PC-9 (cell line): ENCODE measurements at regions of chr16 and their contacts with region 1.

Region 1: DNA sequence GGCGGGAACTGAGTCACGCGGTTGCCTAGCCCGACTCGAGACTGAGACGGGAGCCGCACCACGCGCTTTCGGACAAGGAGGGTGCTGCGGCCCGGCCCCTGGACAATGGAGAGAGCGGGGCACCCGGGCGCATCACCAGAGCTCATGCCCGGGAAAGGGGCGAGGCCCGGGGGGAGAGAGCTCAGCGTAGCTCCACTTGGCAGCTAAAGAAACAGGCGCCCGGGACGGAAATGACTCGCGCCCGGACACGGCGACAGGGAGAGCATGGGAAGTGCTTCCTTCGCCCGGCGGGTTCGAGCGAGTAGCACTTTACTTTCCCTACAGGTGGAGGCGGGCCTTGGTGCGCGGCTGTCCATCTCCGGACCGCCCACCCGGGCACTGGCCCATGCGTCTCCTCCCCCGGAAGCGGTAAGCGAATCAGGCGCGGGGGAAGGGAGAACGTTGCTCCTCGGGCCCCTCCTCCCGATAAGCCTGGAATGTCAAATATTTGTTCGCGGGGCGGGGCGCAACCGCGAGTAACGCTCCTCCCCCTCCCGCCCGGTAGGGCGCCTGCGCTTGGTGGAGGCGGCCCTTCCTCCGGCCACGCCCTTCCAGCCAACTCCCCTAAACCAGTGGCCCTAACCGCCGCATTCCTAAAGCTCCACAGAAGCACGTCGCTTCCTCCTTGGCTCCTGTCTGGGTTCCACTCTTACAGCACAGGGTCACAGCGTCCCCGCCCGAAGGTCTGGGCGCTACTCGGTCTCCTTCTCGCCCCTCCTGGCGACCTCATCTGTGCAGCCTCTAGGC is 1.5 kb upstream of the ESRP2 start:
- DNase-seq: peak; percentile 93 to 99
- H3K4me3 ChIP-seq: peak overlapping the region; percentile 99
- H3K27ac ChIP-seq: peak overlapping the region; percentile 78
- H3K4me1 ChIP-seq: peaks cover 27% of the 10 kb centered on the region
- H3K27me3 ChIP-seq: no peaks in the 10 kb centered on the region
- CTCF ChIP-seq: no peak

Region 2: DNA sequence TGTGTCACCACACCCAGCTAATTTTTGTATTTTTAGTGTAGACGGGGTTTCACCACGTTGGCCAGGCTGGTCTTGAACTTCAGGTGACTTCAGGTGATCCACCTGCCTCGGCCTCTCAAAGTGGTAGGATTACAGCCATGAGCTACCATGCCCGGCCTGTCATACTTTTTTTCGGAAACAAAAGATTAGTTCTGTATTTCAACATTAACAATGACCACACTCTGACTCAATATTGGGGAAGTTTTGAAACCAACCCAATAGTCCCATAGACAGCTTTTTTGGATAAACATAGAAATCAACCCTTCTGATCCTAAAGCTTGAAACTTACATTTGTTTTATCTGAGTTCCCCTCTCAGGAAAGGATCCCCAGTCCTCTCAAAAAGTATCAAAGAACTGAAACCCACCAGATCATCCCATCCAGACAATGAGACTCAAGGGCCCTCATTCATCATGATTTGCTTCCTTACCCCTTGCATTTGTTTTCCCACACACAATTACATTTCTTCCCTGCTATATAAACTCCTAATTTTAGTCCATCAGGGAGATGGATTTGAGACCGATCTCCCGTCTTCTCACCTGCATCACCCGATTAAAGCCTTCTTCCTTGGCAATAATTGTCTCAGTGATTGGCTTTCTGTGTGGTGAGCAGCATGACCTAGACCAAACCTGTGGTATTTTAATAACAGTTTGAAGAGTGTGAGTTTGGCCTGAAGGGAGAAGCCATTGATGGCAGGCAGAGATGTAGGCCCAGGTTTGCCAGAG is 746.9 kb before region 1 on chr16:
- CTCF ChIA-PET with region 1: no interaction called
- POLR2A ChIA-PET with region 1: interaction called, 17 read pairs
- intact Hi-C with region 1: no loop called
- DNase-seq: no peak
- H3K4me3 ChIP-seq: no peak overlapping the region
- H3K27ac ChIP-seq: no peak overlapping the region
- H3K4me1 ChIP-seq: 0 out of 2 replicates have a peak, but pooled peaks cover 4% of the 10 kb centered on the region
- H3K27me3 ChIP-seq: no peaks in the 10 kb centered on the region
- CTCF ChIP-seq: no peak

Region 3: DNA sequence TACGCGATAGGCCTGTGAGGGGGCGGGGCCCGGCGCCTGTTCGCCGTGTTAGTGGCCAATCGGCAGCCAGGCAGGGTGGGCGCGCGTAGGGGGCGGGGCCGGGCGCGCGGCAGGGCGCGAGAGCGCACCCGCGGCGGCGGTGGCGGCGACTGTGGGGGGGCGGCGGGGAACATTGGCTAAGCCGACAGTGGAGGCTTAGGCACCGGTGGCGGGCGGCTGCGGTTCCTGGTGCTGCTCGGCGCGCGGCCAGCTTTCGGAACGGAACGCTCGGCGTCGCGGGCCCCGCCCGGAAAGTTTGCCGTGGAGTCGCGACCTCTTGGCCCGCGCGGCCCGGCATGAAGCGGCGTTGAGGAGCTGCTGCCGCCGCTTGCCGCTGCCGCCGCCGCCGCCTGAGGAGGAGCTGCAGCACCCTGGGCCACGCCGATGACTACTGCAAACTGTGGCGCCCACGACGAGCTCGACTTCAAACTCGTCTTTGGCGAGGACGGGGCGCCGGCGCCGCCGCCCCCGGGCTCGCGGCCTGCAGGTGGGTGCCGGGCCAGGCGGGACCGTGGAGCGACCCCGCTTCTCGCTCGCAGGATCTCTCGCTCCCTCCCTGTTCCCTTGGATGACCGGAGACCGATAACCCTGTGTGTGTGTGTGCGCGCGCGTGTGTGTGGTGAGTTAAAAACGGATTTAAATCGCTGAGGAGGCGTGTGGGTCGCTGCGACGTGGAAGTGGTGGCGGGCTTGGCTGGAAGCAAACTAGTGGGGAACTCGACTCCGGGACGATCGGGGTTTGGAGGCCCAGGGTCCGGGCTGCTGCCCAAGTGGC is 152.0 kb before region 1 on chr16 and contains the start of gene NFATC3:
- CTCF ChIA-PET with region 1: no interaction called
- POLR2A ChIA-PET with region 1: interaction called, 6 read pairs
- intact Hi-C with region 1: loop called (anchors 2 kb)
- DNase-seq: peak; percentile 89 to 96
- H3K4me3 ChIP-seq: peak within 1 kb of the TSS; percentile 91
- H3K27ac ChIP-seq: peak within 1 kb of the TSS; percentile 51
- H3K4me1 ChIP-seq: peaks cover 14% of the 10 kb centered on the region
- H3K27me3 ChIP-seq: no peaks in the 10 kb centered on the region
- CTCF ChIP-seq: no peak
- total RNA-seq, gene NFATC3: 37.2 and 43.7 TPM in 2 replicates

Region 4: DNA sequence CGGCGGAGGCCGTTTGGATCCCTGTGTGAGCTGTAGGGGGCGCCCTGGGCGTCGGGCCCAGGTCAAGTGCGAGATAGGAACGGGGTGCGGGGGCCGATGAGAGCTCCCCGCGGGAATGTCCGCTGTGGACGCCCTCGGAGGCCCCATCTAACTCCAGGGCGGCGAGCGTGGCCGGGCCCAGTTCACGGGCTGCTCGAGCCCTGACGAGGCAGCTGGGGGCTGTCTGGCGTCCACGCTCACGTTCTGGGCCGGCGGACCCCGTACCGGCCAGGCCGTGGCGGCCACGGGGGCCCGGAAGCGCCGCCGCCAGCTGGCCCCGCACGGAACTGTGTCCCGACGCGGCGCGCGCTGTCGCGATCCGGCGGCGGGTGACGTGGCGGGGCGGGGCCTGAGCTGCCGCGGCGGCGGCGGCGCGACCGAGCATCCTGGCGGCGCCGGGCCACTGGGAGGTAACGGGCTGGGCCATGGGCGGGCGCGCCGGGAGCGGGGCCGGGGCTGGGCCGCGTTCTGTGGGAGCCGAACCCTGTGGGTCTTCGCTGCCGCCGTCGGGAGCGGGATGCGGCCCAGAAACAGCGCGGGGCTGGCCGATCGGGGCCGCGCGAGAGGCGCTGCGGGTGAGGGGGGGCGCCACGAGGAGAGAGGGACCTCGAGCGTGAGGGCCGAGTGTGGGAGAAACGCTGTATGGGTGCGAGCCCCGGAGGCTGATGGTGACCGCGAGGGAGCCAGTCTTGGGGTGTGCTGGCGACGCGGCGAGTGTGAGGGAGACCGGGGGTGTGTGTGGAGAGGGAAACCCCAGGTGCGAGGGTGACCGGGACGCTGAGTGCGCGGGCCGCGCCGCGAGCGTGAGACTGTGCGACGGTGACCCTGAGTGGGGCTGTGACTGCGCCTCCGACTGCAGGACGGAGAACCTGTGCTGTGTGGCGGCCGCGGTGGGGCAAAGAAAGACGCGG is 27.0 kb after region 1 on chr16 and contains the start of gene SLC7A6:
- CTCF ChIA-PET with region 1: interaction called, 8 read pairs
- POLR2A ChIA-PET with region 1: interaction called, 6 read pairs
- intact Hi-C with region 1: loop called (anchors 1 kb)
- DNase-seq: peak; percentile 43 to 77
- H3K4me3 ChIP-seq: peak within 1 kb of the TSS; percentile 86
- H3K27ac ChIP-seq: peak within 1 kb of the TSS; percentile 89
- H3K4me1 ChIP-seq: peaks cover 34% of the 10 kb centered on the region
- H3K27me3 ChIP-seq: no peaks in the 10 kb centered on the region
- CTCF ChIP-seq: peak; percentile 76
- total RNA-seq, gene SLC7A6: 28.6 and 44.7 TPM in 2 replicates